HepG2 (cell line): ENCODE measurements at regions of chr16 and their contacts with region 1.

Region 1: DNA sequence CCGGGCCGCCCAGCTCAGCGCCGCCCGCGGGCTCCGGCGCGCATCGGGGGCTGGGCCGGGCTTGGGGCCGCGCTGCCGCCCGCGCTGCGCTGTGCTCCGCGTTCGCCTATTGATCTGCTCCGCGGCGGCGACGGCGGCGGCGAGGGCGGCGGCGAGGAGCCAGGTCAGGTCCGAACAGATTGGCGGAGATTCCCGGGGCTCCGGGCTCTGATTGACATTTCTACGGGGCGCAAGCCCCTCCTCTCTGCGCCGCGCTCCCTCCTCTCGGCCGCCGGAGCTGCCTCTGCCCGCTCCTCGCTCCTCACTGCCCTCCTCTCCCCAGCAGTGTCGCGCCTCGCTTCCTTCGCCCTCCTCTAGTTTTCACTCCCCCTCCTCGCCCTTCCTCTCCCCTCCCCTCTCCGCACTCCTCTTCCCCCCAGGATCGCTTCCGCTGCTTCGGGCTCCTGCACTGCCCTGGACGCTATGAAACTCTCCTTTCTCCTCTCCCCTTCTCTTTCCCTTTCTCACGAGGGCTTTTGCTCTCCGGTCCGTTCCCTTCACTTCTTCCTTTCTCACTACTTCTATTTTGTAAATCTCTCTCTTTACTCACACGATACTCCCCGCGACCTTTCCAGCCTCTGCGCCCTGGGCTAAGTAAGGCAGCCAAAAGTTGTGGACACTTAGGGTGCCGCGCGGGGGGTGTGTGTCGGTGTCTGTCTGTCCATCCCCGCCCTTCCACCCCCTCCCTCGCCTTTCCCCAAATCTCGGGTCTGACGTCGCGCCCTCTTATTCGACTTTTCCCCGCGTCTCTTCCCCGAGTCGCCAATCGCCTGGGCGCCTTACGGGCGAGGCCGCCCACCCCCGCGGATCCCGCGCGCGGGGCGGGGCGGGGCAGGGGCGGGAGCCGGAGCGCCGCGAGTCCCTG is at the start of gene IRX3:
- DNase-seq: peak; percentile 91
- ATAC-seq: peak; percentile 74
- H3K4me3 ChIP-seq: peak within 1 kb of the TSS; percentile 87 to 98 (median 88)
- H3K27ac ChIP-seq: peak within 1 kb of the TSS; percentile 91
- H3K4me1 ChIP-seq: peaks cover 16% of the 10 kb centered on the region
- H3K27me3 ChIP-seq: no peaks in the 10 kb centered on the region
- CTCF ChIP-seq: peak; percentile 26; the same call in 1 of the 2 replicates
- EP300 ChIP-seq: no peak
- POLR2A ChIP-seq: peak; percentile 65 to 67
- RAD21 ChIP-seq: no peak; the same call in 1 of the 2 replicates
- total RNA-seq, gene IRX3: 10.0 and 16.4 TPM in 2 replicates

Region 2: DNA sequence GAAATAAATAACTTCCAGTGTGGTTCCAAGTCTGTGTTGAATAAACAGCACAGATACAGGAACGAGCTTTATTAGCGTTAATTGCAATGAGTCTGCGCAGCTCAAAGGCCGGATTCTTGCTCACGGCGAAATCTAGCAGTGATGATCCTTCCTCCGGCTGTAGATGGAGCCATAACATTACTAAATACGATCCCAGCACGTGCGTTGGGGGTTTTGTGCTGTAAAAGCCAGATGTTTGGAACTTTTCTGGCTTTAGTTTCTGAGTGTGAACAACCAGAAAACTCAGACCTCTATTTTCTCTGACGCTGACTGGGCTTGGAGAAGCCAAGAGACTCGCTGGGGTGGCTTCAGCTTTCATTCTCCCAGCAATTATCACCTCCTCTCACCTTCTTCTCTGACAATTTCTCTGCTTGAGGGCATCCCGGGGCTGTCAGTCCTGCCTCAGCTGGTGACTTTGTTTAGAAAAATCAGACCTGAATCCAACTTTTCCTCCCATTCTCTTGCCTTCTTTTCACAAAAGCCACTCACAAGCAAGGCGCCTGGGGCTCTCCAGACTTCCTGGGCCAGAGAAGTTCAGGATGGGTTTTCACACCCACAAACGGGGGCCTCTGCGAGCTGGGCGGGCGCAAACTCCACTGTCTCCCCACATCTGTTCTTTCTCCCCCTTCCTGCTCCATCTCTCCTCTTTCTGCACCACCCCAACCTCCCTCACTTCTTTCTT is 736.2 kb before region 1 on chr16:
- CTCF ChIA-PET with region 1: no interaction called
- POLR2A ChIA-PET with region 1: no interaction called
- in situ Hi-C with region 1: no loop called
- intact Hi-C with region 1: loop called (anchors 10 kb)
- DNase-seq: peak; percentile 69
- ATAC-seq: peak; percentile 83
- H3K4me3 ChIP-seq: no peak overlapping the region
- H3K27ac ChIP-seq: no peak overlapping the region
- H3K4me1 ChIP-seq: peaks cover 26% of the 10 kb centered on the region
- H3K27me3 ChIP-seq: peaks cover 0 to 25% of the 10 kb centered on the region in 2 experiments
- CTCF ChIP-seq: peak; percentile 95
- EP300 ChIP-seq: no peak
- POLR2A ChIP-seq: no peak
- RAD21 ChIP-seq: peak; percentile 87

Region 3: GRCh38 chr16:53892155-53892554 is 394.2 kb before region 1 on chr16:
- CTCF ChIA-PET with region 1: no interaction called
- POLR2A ChIA-PET with region 1: no interaction called
- in situ Hi-C with region 1: no loop called
- intact Hi-C with region 1: loop called (anchors 10 kb)
- DNase-seq: peak; percentile 61
- ATAC-seq: peak; percentile 87
- H3K4me3 ChIP-seq: no peak overlapping the region
- H3K27ac ChIP-seq: no peak overlapping the region
- H3K4me1 ChIP-seq: peaks cover 26% of the 10 kb centered on the region
- H3K27me3 ChIP-seq: no peaks in the 10 kb centered on the region
- CTCF ChIP-seq: peak; percentile 87
- EP300 ChIP-seq: 0 out of 4 replicates have a peak, but pooled peaks of 1 of the 2 experiments have one; percentile 38
- POLR2A ChIP-seq: no peak
- RAD21 ChIP-seq: peak; percentile 77

Region 4: DNA sequence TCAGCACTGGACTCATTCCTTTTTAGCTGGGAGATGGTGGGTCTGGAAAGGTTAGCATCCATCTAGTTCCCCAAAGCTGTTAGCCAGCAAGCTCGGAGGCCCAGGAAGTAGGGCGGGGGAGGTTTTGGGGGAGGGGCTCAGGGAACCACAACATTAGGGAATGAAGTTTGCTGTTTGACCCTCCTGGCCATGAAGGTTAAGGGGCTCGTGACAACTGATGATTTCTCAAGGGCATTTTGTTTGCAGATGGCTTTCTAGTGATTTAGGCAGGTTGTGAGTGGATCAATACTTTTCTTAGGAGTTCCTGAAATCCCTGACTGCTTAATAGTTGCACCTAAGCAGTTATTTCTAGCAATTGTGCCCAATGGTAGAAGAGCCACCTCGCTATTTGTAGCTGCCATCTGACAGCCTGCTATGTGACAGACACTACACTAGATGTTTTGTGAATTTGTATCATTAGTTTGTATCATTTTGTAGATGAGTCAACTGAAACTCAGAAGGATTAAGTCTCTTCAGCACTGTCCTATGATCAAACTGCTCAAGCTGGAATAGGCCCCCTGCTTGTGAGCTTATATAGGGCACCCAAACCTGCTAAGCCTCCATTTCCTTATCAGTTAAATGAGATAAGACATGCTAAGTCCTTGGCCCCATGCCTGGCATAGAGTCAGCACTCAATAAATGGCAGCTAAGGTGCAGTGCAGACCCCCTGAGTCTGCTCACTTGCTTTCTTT is 146.1 kb before region 1 on chr16:
- CTCF ChIA-PET with region 1: no interaction called
- POLR2A ChIA-PET with region 1: no interaction called
- in situ Hi-C with region 1: no loop called
- intact Hi-C with region 1: no loop called
- DNase-seq: peak; percentile 53
- ATAC-seq: peak; percentile 76
- H3K4me3 ChIP-seq: no peak overlapping the region
- H3K27ac ChIP-seq: no peak overlapping the region
- H3K4me1 ChIP-seq: peaks cover 56% of the 10 kb centered on the region
- H3K27me3 ChIP-seq: no peaks in the 10 kb centered on the region
- CTCF ChIP-seq: no peak
- EP300 ChIP-seq: peak in 1 of 2 experiments; percentile 51; a peak in 2 of 4 replicates
- POLR2A ChIP-seq: no peak
- RAD21 ChIP-seq: no peak

Region 5: GRCh38 chr16:54165174-54165911 is 121.0 kb before region 1 on chr16:
- CTCF ChIA-PET with region 1: no interaction called
- POLR2A ChIA-PET with region 1: interaction called, 16 read pairs
- in situ Hi-C with region 1: no loop called
- intact Hi-C with region 1: no loop called
- DNase-seq: peak; percentile 99
- ATAC-seq: peak; percentile 93
- H3K4me3 ChIP-seq: peak overlapping the region in 2 of 3 experiments; percentile 5 to 49; a peak in 2 of 6 replicates
- H3K27ac ChIP-seq: peak overlapping the region; percentile 88
- H3K4me1 ChIP-seq: peaks cover 77% of the 10 kb centered on the region
- H3K27me3 ChIP-seq: no peaks in the 10 kb centered on the region
- CTCF ChIP-seq: peak; percentile 36; the same call in 1 of the 2 replicates
- EP300 ChIP-seq: peak; percentile 80 to 96
- POLR2A ChIP-seq: peak in 1 of 2 experiments; percentile 79; a peak in 2 of 4 replicates
- RAD21 ChIP-seq: peak; percentile 72

Region 6: GRCh38 chr16:54178478-54178976 is 107.8 kb before region 1 on chr16:
- CTCF ChIA-PET with region 1: no interaction called
- POLR2A ChIA-PET with region 1: interaction called, 15 read pairs
- in situ Hi-C with region 1: no loop called
- intact Hi-C with region 1: loop called (anchors 2 kb)
- DNase-seq: no peak
- ATAC-seq: no peak
- H3K4me3 ChIP-seq: no peak overlapping the region
- H3K27ac ChIP-seq: peak overlapping the region; percentile 97
- H3K4me1 ChIP-seq: peaks cover 98% of the 10 kb centered on the region
- H3K27me3 ChIP-seq: no peaks in the 10 kb centered on the region
- CTCF ChIP-seq: no peak
- EP300 ChIP-seq: no peak
- POLR2A ChIP-seq: no peak
- RAD21 ChIP-seq: no peak

Region 7: DNA sequence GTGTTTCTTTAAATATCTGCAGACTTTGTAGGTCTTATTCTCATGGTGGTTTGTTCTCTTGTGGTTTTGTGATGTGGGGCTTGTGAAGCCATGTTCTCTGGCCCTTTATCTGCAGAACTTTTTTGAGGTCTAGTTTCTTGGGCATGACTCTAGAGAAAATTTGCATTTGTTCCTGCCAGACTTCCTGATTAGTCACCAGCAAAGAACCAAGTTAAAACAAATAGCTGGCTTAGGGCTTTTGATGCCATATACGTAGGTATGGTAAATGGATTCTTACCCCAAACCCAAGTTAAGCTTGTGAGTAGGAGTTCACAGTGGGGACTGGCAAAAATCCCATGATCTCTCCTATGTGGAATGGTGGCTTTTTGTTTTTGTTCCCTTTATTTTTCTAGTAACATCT is 68.9 kb after region 1 on chr16:
- CTCF ChIA-PET with region 1: no interaction called
- POLR2A ChIA-PET with region 1: no interaction called
- in situ Hi-C with region 1: no loop called
- intact Hi-C with region 1: no loop called
- DNase-seq: no peak
- ATAC-seq: no peak
- H3K4me3 ChIP-seq: no peak overlapping the region
- H3K27ac ChIP-seq: no peak overlapping the region
- H3K4me1 ChIP-seq: no peaks in the 10 kb centered on the region
- H3K27me3 ChIP-seq: peaks cover under 1 to 34% of the 10 kb centered on the region in 2 experiments; a peak in 4 of 5 replicates
- CTCF ChIP-seq: no peak
- EP300 ChIP-seq: no peak
- POLR2A ChIP-seq: no peak
- RAD21 ChIP-seq: no peak

Region 8: GRCh38 chr16:54602666-54603065 is 316.3 kb after region 1 on chr16:
- CTCF ChIA-PET with region 1: no interaction called
- POLR2A ChIA-PET with region 1: no interaction called
- in situ Hi-C with region 1: no loop called
- intact Hi-C with region 1: no loop called
- DNase-seq: no peak
- ATAC-seq: no peak
- H3K4me3 ChIP-seq: no peak overlapping the region
- H3K27ac ChIP-seq: no peak overlapping the region
- H3K4me1 ChIP-seq: no peaks in the 10 kb centered on the region
- H3K27me3 ChIP-seq: no peaks in the 10 kb centered on the region
- CTCF ChIP-seq: no peak
- EP300 ChIP-seq: no peak
- POLR2A ChIP-seq: no peak
- RAD21 ChIP-seq: no peak

Region 9: DNA sequence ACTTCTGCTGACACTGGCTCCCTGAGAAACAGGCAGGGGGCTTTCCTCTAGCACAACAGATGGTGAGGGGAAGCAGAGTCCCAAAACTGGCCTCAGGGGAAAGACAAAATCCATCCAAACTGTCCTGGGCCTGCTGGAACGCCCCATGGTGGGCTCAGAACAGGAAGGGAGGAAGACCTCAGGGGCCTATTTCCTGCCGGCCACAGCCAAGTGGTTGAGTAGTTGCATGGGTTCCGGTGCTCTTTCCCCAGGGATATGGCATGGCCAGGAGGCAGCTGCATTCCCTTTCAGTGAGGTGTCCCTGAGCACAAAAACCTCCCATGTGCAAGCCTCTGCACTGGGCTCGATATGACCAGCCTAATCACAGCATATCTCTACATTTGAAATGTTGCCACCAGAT is 341.3 kb after region 1 on chr16:
- CTCF ChIA-PET with region 1: no interaction called
- POLR2A ChIA-PET with region 1: no interaction called
- in situ Hi-C with region 1: no loop called
- intact Hi-C with region 1: loop called (anchors 10 kb)
- DNase-seq: no peak
- ATAC-seq: no peak
- H3K4me3 ChIP-seq: no peak overlapping the region
- H3K27ac ChIP-seq: no peak overlapping the region
- H3K4me1 ChIP-seq: peaks cover 20% of the 10 kb centered on the region
- H3K27me3 ChIP-seq: peaks cover 5 to 74% of the 10 kb centered on the region in 2 experiments; a peak in 4 of 5 replicates
- CTCF ChIP-seq: no peak
- EP300 ChIP-seq: no peak
- POLR2A ChIP-seq: no peak
- RAD21 ChIP-seq: no peak